MCF 10A (cell line): ENCODE measurements at regions of chr3 and their contacts with region 1.

Region 1: GRCh38 chr3:69084326-69085167 is at the start of gene ARL6IP5:
- DNase-seq: peak; percentile 92
- H3K4me3 Mint-ChIP-seq: peak within 1 kb of the TSS; percentile 81
- H3K27ac Mint-ChIP-seq: peak within 1 kb of the TSS; percentile 85
- H3K4me1 Mint-ChIP-seq: peaks cover 39% of the 10 kb centered on the region
- H3K27me3 Mint-ChIP-seq: no peaks in the 10 kb centered on the region
- CTCF ChIP-seq: no peak
- total RNA-seq, gene ARL6IP5: 50.0 and 81.6 TPM in 2 replicates

Region 2: DNA sequence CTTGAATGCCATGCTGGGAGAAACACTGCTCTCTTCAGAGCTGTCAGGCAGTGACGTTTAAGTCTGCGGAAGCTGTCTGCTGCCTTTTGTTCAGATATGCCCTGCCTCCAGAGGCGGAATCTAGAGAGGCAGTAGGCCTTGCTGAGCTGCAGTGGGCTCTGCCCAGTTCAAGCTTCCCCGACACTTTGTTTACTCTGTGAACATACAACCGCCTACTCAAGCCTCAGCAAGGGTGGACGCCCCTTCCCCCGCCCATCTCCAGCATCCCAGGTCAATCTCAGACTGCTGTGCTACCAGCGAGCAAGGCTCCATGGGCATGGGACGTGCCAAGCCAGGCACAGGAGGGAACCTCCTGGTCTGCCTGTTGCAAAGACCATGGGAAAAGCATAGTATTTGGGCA is 251.9 kb before region 1 on chr3:
- CTCF ChIA-PET with region 1: no interaction called
- POLR2A ChIA-PET with region 1: no interaction called
- intact Hi-C with region 1: no loop called
- DNase-seq: no peak
- H3K4me3 Mint-ChIP-seq: no peak overlapping the region
- H3K27ac Mint-ChIP-seq: no peak overlapping the region
- H3K4me1 Mint-ChIP-seq: no peaks in the 10 kb centered on the region
- H3K27me3 Mint-ChIP-seq: peaks cover 48% of the 10 kb centered on the region
- CTCF ChIP-seq: no peak

Region 3: DNA sequence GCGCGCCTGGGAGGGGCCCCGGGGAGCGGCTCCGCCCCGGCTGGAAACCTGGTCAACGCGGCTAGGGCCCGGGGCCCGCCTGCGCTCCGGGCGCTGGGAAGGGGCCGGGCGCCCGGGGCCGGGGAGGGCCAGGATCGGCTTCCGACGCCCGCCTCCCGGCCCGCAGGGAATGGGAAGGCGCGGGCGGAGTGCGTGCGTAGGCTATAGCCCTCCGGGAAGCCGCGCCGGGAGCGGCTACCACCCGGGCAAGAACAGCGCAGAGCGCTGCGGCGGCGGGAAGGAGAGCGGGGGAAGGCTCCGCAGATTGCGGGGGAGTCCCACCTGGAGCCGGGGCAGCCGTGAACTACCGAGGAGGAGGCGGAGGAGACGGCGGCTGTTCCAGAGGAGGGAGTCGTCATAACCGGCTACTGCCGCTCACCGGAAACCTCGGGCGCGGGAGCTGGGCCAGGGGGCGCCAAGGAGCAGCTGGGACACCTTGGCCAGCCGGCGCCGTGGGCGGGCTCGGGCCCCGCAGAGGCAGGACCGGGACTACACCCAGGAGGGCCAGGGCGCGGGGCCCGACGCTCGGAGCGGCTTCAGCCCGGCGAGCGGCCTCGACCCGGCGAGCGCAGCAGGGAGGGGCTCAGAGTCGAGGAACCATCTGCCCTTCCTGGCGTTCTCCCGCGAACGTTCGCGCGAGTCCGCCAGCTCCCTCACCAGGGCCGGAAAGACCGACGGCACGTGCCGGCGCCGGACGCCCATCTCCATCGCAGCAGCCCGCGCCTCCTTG is 71.1 kb before region 1 on chr3 and contains the start of gene EOGT:
- CTCF ChIA-PET with region 1: interaction called, 5 read pairs
- POLR2A ChIA-PET with region 1: interaction called, 94 read pairs
- intact Hi-C with region 1: loop called (anchors 5 kb)
- DNase-seq: peak; percentile 89
- H3K4me3 Mint-ChIP-seq: peak within 1 kb of the TSS; percentile 89
- H3K27ac Mint-ChIP-seq: peak within 1 kb of the TSS; percentile 91
- H3K4me1 Mint-ChIP-seq: peaks cover 32% of the 10 kb centered on the region
- H3K27me3 Mint-ChIP-seq: no peaks in the 10 kb centered on the region
- CTCF ChIP-seq: peak; percentile 67
- total RNA-seq, gene EOGT: 40.9 and 41.7 TPM in 2 replicates

Region 4: GRCh38 chr3:69051756-69052471 is 32.6 kb before region 1 on chr3 and contains the start of gene TMF1:
- CTCF ChIA-PET with region 1: interaction called, 4 read pairs
- POLR2A ChIA-PET with region 1: interaction called, 371 read pairs
- intact Hi-C with region 1: loop called (anchors 1 kb)
- DNase-seq: peak; percentile 98
- H3K4me3 Mint-ChIP-seq: peak within 1 kb of the TSS; percentile 86
- H3K27ac Mint-ChIP-seq: peak within 1 kb of the TSS; percentile 95
- H3K4me1 Mint-ChIP-seq: peaks cover 20% of the 10 kb centered on the region
- H3K27me3 Mint-ChIP-seq: no peaks in the 10 kb centered on the region
- CTCF ChIP-seq: no peak
- total RNA-seq, gene TMF1: 50.2 and 52.4 TPM in 2 replicates

Region 5: GRCh38 chr3:69065318-69065964 is 19.1 kb before region 1 on chr3:
- CTCF ChIA-PET with region 1: no interaction called
- POLR2A ChIA-PET with region 1: interaction called, 22 read pairs
- intact Hi-C with region 1: no loop called
- DNase-seq: no peak
- H3K4me3 Mint-ChIP-seq: no peak overlapping the region
- H3K27ac Mint-ChIP-seq: no peak overlapping the region
- H3K4me1 Mint-ChIP-seq: no peaks in the 10 kb centered on the region
- H3K27me3 Mint-ChIP-seq: no peaks in the 10 kb centered on the region
- CTCF ChIP-seq: no peak

Region 6: DNA sequence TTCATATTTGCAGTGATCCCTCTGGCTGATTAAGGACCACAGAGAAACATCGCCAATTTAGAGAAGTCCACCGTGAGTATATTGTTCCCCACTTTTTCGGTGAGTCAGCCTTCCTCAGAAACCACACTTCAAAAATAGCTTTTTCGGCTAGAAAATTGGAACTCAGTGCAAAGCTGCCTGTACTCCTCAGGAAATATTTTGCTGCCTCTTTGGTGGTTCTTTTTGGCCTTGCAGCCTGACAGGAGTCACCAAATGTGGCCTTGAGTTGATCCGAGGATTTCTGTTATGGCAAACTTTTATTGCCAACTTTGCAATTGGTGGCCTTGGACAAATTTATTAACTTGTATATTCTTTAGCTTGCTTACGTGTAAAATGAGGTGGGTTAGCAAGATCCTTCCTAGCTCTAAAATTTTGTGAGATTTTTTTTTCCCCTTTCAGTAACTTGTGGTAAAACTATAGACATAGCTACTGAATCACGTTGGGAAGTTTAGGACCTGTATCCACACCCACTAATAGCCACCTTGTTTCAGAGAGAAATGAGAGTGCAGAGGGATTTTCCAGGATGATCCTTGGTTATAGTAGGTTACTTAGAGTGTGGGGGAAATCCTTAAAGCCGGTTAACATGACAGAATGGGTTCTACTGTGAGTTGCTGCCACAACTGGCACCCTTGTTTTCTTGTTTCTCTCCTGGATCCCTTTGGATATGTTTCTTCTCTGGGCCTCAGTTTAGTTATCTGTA is 10.1 kb after region 1 on chr3:
- CTCF ChIA-PET with region 1: interaction called, 7 read pairs
- POLR2A ChIA-PET with region 1: interaction called, 54 read pairs
- intact Hi-C with region 1: no loop called
- DNase-seq: no peak
- H3K4me3 Mint-ChIP-seq: no peak overlapping the region
- H3K27ac Mint-ChIP-seq: no peak overlapping the region
- H3K4me1 Mint-ChIP-seq: peaks cover 35% of the 10 kb centered on the region
- H3K27me3 Mint-ChIP-seq: no peaks in the 10 kb centered on the region
- CTCF ChIP-seq: no peak

Region 7: GRCh38 chr3:69104996-69105719 is 20.6 kb after region 1 on chr3:
- CTCF ChIA-PET with region 1: interaction called, 7 read pairs
- POLR2A ChIA-PET with region 1: interaction called, 13 read pairs
- intact Hi-C with region 1: no loop called
- DNase-seq: no peak
- H3K4me3 Mint-ChIP-seq: no peak overlapping the region
- H3K27ac Mint-ChIP-seq: no peak overlapping the region
- H3K4me1 Mint-ChIP-seq: no peaks in the 10 kb centered on the region
- H3K27me3 Mint-ChIP-seq: no peaks in the 10 kb centered on the region
- CTCF ChIP-seq: no peak

Region 8: DNA sequence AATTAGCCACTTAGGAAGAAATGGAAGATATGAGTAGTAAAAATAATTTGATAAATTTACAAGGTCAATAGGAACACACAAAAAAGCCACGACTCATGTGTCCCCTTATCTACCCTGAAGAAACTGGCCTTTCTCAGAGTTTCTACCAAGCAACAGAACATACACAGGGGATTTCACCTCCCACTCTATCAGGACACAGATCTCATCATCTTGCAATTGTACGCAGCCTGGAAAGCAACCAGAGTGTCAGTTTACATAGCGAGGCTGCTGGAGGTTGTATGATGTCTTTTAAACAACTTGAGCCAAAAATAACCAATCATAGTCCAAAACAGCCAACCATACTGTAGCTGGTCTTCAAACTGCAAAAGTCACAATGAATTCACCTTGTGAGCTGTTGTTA is 57.5 kb after region 1 on chr3:
- CTCF ChIA-PET with region 1: no interaction called
- POLR2A ChIA-PET with region 1: no interaction called
- intact Hi-C with region 1: no loop called
- DNase-seq: no peak
- H3K4me3 Mint-ChIP-seq: no peak overlapping the region
- H3K27ac Mint-ChIP-seq: no peak overlapping the region
- H3K4me1 Mint-ChIP-seq: peaks cover 18% of the 10 kb centered on the region
- H3K27me3 Mint-ChIP-seq: no peaks in the 10 kb centered on the region
- CTCF ChIP-seq: no peak

Region 9: DNA sequence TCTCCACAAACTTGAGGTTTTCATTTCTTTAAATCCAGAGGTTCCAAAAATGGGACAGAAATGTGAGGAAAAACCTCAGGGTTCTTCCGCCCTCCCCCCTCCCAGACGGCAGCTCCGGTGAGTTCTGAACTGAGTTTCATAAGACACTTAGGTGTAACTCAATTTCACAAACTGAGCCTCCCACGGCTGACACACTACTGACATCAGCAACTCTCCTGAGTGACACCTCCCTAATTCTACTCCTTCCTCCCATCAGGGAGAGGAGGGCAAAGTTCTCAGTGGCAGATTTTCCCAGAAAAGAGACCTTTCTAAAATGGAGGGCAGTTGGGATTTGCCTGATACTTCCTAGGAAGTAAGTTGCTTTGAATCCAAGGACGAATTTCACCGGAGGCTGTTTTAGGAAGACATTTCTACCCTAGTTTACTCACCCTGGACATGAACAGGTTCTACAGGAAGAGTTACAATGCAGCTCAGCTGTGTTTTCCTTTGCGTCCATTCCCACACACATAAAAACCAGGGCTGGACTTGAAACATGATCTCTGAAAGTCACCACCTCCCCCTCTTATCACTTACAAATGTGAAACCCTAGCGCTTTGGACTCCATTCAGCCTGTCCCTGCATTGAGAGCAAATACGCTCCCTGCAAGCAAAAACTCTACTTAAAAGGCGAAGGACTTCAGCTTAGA is 116.0 kb after region 1 on chr3:
- CTCF ChIA-PET with region 1: no interaction called
- POLR2A ChIA-PET with region 1: interaction called, 10 read pairs
- intact Hi-C with region 1: loop called (anchors 5 kb)
- DNase-seq: peak; percentile 92
- H3K4me3 Mint-ChIP-seq: peak overlapping the region; percentile 75
- H3K27ac Mint-ChIP-seq: peak overlapping the region; percentile 93
- H3K4me1 Mint-ChIP-seq: peaks cover 24% of the 10 kb centered on the region
- H3K27me3 Mint-ChIP-seq: no peaks in the 10 kb centered on the region
- CTCF ChIP-seq: no peak